ENCODE measurements at regions of chr1 and their contacts with region 1.

Region 1: GRCh38 chr1:171141688-171142415 is 43.2 kb upstream of the FMO2 start:
- DNase-seq: peak; percentile 50
- ATAC-seq: peak; percentile 80

Region 2: GRCh38 chr1:171188388-171189266 is 46.8 kb after region 1 on chr1:
- intact Hi-C with region 1: loop called (anchors 5 kb)
- DNase-seq: peak; percentile 45
- ATAC-seq: peak; percentile 72

Region 3: GRCh38 chr1:171313835-171314320 is 172.0 kb after region 1 on chr1 and contains the start of gene FMO4:
- intact Hi-C with region 1: no loop called
- DNase-seq: peak; percentile 53
- ATAC-seq: peak; percentile 100
- total RNA-seq, gene FMO4: 2.2 TPM